PC-9 (cell line): ENCODE measurements at regions of chr10 and their contacts with region 1.

Region 1: GRCh38 chr10:128150045-128150493 is 23.8 kb upstream of the MKI67 start:
- DNase-seq: peak in 1 of 2 experiments; percentile 8
- H3K4me3 ChIP-seq: no peak overlapping the region
- H3K27ac ChIP-seq: no peak overlapping the region
- H3K4me1 ChIP-seq: no peaks in the 10 kb centered on the region
- H3K27me3 ChIP-seq: peaks cover 9% of the 10 kb centered on the region
- CTCF ChIP-seq: peak; percentile 43

Region 2: DNA sequence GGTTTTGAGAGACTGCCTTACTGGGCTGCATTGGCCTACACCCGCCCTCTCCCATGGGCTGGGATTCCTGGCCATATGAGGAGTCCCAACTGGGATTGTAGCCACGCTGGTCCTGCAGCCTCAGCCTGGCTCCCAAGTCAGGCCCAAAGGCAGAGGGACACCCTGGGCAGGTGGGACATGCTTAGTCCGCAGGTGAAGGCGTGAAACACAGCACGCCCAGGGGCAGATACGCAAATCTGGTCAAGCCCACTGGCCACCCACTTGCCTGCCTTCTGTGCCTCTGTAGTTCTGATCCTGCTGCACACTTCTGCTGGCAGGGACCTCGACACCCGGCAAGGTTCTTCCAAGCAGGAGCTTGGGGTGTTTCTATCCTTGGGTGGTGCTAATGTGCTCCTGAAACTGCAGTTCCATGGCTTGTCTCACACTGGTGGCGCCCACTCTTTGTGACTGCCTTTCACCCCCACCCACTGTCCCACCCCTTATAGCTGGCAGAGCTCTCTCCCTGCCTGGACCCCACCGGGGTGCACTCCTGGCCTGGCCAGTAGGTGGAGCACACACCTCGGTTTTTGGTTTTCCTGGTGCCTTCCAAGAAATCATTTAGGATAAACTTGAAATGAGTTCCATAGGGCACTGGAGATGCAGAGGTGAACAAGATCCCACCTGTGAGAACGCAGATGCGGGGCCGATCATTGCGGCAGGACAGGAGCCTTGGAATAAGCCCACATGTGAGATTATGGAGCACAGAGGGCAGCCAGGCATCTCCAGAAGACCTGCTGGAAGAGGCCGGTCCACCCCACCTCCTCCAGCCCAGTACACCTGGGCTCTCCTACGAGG is 71.7 kb before region 1 on chr10:
- CTCF ChIA-PET with region 1: no interaction called
- POLR2A ChIA-PET with region 1: no interaction called
- intact Hi-C with region 1: loop called (anchors 2 kb)
- DNase-seq: peak in 1 of 2 experiments; percentile 39
- H3K4me3 ChIP-seq: no peak overlapping the region
- H3K27ac ChIP-seq: no peak overlapping the region
- H3K4me1 ChIP-seq: no peaks in the 10 kb centered on the region
- H3K27me3 ChIP-seq: no peaks in the 10 kb centered on the region
- CTCF ChIP-seq: peak; percentile 73

Region 3: GRCh38 chr10:128242641-128243040 is 92.6 kb after region 1 on chr10:
- CTCF ChIA-PET with region 1: no interaction called
- POLR2A ChIA-PET with region 1: no interaction called
- intact Hi-C with region 1: no loop called
- DNase-seq: no peak
- H3K4me3 ChIP-seq: no peak overlapping the region
- H3K27ac ChIP-seq: no peak overlapping the region
- H3K4me1 ChIP-seq: no peaks in the 10 kb centered on the region
- H3K27me3 ChIP-seq: peaks cover 13% of the 10 kb centered on the region; the same call in 1 of the 2 replicates
- CTCF ChIP-seq: no peak

Region 4: DNA sequence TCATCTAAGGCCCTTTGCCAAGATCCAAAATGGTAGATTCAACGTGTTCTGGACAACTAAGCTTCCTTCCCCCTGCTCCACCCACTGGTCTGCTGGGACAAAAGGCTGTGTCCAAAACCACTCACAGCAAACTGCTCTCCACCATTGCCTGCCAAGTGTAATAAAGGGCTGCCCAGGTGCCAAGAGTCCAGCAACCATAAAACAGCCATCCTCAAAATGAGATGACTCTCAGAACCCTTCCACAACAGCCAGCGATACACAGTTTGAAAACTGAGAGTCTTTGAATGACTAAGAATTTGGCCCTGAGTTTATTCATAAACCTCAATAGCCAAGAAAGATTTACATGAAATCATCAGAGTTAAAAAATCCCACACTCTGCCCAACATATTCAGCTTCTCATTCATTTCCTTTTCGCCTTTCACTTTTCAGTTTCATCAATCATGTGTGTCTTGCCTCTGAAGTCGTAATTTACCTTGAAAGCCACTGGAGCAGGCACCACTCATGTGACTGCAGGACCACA is 658.9 kb after region 1 on chr10:
- CTCF ChIA-PET with region 1: no interaction called
- POLR2A ChIA-PET with region 1: no interaction called
- intact Hi-C with region 1: no loop called
- DNase-seq: no peak
- H3K4me3 ChIP-seq: no peak overlapping the region
- H3K27ac ChIP-seq: no peak overlapping the region
- H3K4me1 ChIP-seq: no peaks in the 10 kb centered on the region
- H3K27me3 ChIP-seq: peaks cover 21% of the 10 kb centered on the region
- CTCF ChIP-seq: no peak